Endothelial cell of umbilical vein (primary cell): ENCODE measurements at regions of chr19 and their contacts with region 1.

Region 1: DNA sequence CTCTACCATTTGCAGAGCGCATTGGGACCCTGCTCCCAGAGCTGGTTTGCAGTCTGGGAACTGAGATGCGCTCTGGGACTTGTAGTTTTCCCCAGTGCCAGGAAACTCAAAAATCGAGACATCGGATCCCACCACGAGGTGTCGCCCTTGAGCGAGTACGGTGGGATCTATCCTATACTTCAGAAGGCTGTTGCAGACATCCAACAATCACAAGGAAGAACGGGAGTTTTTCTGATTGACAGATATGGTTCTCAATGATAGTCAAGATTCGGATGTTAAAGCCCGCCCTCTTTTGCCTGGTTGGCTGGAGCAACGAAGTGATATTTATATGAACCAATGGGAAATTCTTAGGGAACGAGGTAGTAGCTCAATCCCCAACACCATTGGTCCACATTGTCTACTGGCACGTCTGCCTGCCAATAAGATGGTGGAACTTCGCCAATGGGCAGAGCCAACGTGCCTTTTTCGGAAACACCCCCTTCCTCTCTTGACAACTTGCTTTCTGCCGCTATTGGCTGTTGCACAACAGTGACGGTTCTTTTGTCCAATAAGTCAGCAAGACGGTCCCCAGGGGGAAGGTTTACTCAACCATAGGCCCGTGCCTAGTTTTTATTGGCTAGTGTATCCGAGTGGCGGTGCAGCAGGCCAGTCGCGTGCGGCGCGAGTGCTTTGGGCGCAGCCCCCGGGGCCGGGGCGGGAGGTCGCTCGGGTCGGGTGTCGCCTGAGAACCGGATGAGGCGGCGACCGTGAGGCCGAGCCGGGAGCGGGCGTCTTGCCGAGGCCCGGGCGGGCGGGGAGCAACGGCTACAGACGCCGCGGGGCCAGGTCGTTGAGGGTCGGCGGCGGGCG is at the start of gene DNM2:
- DNase-seq: peak; percentile 100
- H3K4me3 ChIP-seq: peak within 1 kb of the TSS; percentile 25 to 82 (median 49)
- H3K27ac ChIP-seq: peak within 1 kb of the TSS; percentile 74
- H3K4me1 ChIP-seq: peaks cover 13% of the 10 kb centered on the region
- H3K27me3 ChIP-seq: no peaks in the 10 kb centered on the region
- CTCF ChIP-seq: peak; percentile 77 to 88
- POLR2A ChIP-seq: peak; percentile 60
- total RNA-seq, gene DNM2: 164 and 175 TPM in 2 replicates

Region 2: DNA sequence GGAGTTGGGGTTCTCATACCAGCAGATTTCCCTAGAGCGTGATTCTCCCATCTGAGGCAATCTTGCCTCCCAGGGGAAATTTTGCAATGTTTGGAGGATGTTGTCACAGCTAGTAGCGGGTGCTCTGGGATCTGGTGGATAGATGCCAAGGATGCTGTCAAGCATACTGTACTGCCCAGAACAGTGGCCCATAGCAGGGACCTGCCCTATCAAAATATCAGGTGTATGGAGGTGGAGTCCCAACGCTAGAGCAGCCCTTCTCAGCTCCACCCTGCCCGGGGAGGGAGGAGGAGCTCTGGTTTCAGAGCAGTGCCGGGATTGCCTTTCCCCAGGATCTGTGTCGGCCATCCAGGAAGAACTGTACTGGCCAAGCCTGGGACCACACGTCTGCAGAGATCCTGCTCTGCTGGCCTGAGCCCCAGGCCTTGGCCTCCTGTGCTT is 27.2 kb before region 1 on chr19:
- CTCF ChIA-PET with region 1: no interaction called
- POLR2A ChIA-PET with region 1: no interaction called
- dilution Hi-C with region 1: no loop called
- intact Hi-C with region 1: no loop called
- DNase-seq: no peak
- H3K4me3 ChIP-seq: no peak overlapping the region
- H3K27ac ChIP-seq: no peak overlapping the region
- H3K4me1 ChIP-seq: peaks cover 6% of the 10 kb centered on the region
- H3K27me3 ChIP-seq: no peaks in the 10 kb centered on the region
- CTCF ChIP-seq: no peak
- POLR2A ChIP-seq: no peak

Region 3: DNA sequence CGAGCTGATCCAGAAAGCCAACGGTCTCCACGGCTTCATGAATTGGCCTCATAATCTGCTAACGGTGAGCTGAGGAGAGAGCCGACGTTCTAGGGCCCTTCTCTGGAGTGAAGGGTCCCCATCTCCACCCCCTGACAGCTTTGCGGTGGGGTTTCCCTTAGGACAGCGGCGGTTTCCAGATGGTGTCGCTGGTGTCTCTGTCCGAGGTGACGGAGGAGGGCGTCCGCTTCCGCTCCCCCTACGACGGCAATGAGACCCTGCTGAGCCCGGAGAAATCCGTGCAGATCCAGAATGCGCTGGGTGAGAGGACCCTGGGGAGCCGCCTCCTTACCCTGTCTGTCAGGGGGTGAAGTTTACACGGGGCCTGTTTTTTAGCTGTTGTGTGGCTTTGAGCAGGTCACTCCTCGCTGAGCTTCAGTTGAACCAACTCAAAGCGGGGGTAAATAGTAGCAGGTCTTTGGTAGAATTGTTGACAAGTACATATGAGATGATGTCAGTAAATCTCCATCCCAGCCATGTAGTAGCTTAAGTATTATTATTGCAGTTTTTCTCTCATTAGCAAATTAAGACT is 15.5 kb before region 1 on chr19:
- CTCF ChIA-PET with region 1: interaction called, 32 read pairs
- POLR2A ChIA-PET with region 1: no interaction called
- dilution Hi-C with region 1: no loop called
- intact Hi-C with region 1: loop called (anchors 1 kb)
- DNase-seq: peak; percentile 13
- H3K4me3 ChIP-seq: peak overlapping the region; percentile 36 to 99 (median 68)
- H3K27ac ChIP-seq: peak overlapping the region; percentile 0
- H3K4me1 ChIP-seq: peaks cover 10% of the 10 kb centered on the region
- H3K27me3 ChIP-seq: no peaks in the 10 kb centered on the region
- CTCF ChIP-seq: no peak
- POLR2A ChIP-seq: no peak

Region 4: DNA sequence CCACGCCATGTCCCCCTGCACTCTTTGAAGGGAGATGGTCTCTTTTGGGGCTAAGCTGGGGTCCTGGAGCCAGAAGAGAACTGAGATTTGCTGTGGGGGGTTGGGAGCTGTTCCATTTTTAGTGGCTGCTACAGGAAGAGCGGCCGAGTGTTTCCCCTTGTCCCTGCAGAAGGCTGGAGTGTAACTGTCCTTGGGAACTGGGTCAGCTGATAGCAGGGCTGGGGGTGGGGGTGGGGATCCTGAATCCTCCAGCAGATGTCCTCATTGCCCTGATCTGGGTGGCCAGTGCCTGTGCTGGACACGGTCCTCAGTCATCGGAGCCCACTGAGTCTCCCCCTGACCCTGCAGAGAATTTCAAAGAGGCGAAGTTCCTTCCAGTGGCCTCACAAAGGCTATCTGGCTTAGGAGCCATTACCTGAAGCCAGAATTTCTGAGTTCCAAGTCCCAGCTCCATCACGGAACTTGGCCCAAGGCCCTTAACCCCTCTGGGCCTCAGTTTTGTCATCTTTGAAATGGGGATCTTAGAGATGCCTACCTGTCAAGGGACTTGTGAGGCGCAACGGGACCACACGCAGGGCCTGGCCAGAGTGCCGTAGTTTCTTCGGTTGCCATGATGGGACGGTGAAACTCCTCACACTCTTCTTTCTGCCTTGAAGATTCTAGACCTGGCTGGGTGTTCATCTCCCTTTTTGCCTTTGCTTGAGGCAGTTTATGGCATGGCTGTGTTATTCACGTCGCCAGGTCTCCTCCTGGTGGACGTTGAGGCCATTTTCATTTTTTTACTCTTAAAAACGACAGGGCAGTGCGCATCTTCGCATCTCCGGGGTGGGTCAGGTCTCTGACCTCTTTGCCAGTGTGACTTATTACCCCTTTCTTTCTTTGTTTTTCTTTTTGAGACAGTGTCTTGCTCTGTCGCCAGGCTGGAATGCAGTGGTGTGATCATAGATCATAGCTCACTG is 52.2 kb after region 1 on chr19:
- CTCF ChIA-PET with region 1: interaction called, 37 read pairs
- POLR2A ChIA-PET with region 1: no interaction called
- dilution Hi-C with region 1: no loop called
- intact Hi-C with region 1: loop called (anchors 1 kb)
- DNase-seq: peak; percentile 53
- H3K4me3 ChIP-seq: no peak overlapping the region
- H3K27ac ChIP-seq: no peak overlapping the region
- H3K4me1 ChIP-seq: peaks cover 3% of the 10 kb centered on the region
- H3K27me3 ChIP-seq: no peaks in the 10 kb centered on the region
- CTCF ChIP-seq: peak in 1 of 2 donors; percentile 42
- POLR2A ChIP-seq: no peak

Region 5: GRCh38 chr19:10820173-10820572 is 102.6 kb after region 1 on chr19:
- CTCF ChIA-PET with region 1: interaction called, 27 read pairs
- POLR2A ChIA-PET with region 1: no interaction called
- dilution Hi-C with region 1: no loop called
- intact Hi-C with region 1: no loop called
- DNase-seq: no peak
- H3K4me3 ChIP-seq: no peak overlapping the region
- H3K27ac ChIP-seq: no peak overlapping the region
- H3K4me1 ChIP-seq: no peaks in the 10 kb centered on the region
- H3K27me3 ChIP-seq: no peaks in the 10 kb centered on the region
- CTCF ChIP-seq: peak; percentile 25 to 31
- POLR2A ChIP-seq: no peak

Region 6: GRCh38 chr19:10858204-10858828 is 140.7 kb after region 1 on chr19:
- CTCF ChIA-PET with region 1: interaction called, 100 read pairs
- POLR2A ChIA-PET with region 1: no interaction called
- dilution Hi-C with region 1: no loop called
- intact Hi-C with region 1: loop called (anchors 1 kb)
- DNase-seq: peak; percentile 38
- H3K4me3 ChIP-seq: no peak overlapping the region
- H3K27ac ChIP-seq: no peak overlapping the region
- H3K4me1 ChIP-seq: no peaks in the 10 kb centered on the region
- H3K27me3 ChIP-seq: no peaks in the 10 kb centered on the region
- CTCF ChIP-seq: peak; percentile 90 to 91
- POLR2A ChIP-seq: no peak

Region 7: DNA sequence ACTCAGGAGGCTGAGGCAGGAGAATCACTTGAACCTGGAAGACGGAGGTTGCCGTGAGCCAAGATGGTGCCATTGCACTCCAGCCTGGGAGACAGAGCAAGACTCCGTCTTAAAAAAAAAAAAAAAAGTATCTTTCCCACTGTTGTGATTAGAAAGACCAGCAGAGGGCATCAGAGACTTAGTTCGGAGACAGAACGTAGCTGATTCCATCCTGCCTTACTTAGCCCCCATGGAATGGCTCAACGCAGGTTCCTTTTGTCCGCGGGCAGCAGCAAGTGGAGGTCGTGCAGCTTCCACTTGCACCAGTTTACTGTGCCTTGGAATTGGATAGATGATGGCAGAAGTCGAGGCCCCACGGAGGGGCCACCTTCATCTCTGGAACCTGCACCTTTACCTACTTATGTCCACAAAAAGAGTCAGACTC is 219.1 kb after region 1 on chr19:
- CTCF ChIA-PET with region 1: interaction called, 3 read pairs
- POLR2A ChIA-PET with region 1: no interaction called
- dilution Hi-C with region 1: no loop called
- intact Hi-C with region 1: loop called (anchors 1 kb)
- DNase-seq: peak; percentile 86
- H3K4me3 ChIP-seq: no peak overlapping the region
- H3K27ac ChIP-seq: no peak overlapping the region
- H3K4me1 ChIP-seq: peaks cover 7% of the 10 kb centered on the region
- H3K27me3 ChIP-seq: no peaks in the 10 kb centered on the region
- CTCF ChIP-seq: peak; percentile 49 to 60
- POLR2A ChIP-seq: no peak